Transverse colon (tissue), 4 donors: ENCODE measurements at regions of chr9 and their contacts with region 1.

Region 1: GRCh38 chr9:78905986-78906755 is 609.2 kb downstream of the PSAT1 start:
- DNase-seq: no peak
- H3K4me3 ChIP-seq: no peak overlapping the region
- H3K27ac ChIP-seq: no peak overlapping the region
- H3K4me1 ChIP-seq: no peaks in the 10 kb centered on the region
- H3K27me3 ChIP-seq: no peaks in the 10 kb centered on the region
- CTCF ChIP-seq: no peak
- EP300 ChIP-seq: no peak
- POLR2A ChIP-seq: no peak

Region 2: GRCh38 chr9:78939311-78940065 is 33.3 kb after region 1 on chr9:
- in situ Hi-C with region 1: no loop called
- intact Hi-C with region 1: loop called (anchors 1 kb)
- DNase-seq: no peak
- H3K4me3 ChIP-seq: no peak overlapping the region
- H3K27ac ChIP-seq: no peak overlapping the region
- H3K4me1 ChIP-seq: no peaks in the 10 kb centered on the region
- H3K27me3 ChIP-seq: no peaks in the 10 kb centered on the region
- CTCF ChIP-seq: no peak
- EP300 ChIP-seq: no peak
- POLR2A ChIP-seq: no peak

Region 3: GRCh38 chr9:79975621-79976256 is 1069.6 kb after region 1 on chr9:
- in situ Hi-C with region 1: no loop called
- intact Hi-C with region 1: no loop called
- DNase-seq: no peak
- H3K4me3 ChIP-seq: no peak overlapping the region
- H3K27ac ChIP-seq: no peak overlapping the region
- H3K4me1 ChIP-seq: peaks cover 0 to 3% (median 0%) of the 10 kb centered on the region in 4 donors
- H3K27me3 ChIP-seq: no peaks in the 10 kb centered on the region
- CTCF ChIP-seq: no peak
- EP300 ChIP-seq: no peak
- POLR2A ChIP-seq: no peak